ENCODE measurements at regions of chr3 and their contacts with region 1.

Region 1: GRCh38 chr3:11379233-11379823 is 107.1 kb downstream of the ATG7 start:
- DNase-seq: peak; percentile 74
- H3K4me3 ChIP-seq: no peak overlapping the region
- H3K27ac ChIP-seq: peak overlapping the region; percentile 65
- H3K27me3 ChIP-seq: no peaks in the 10 kb centered on the region
- CTCF ChIP-seq: peak; percentile 49

Region 2: GRCh38 chr3:11250902-11251813 is 128.2 kb before region 1 on chr3:
- in situ Hi-C with region 1: no loop called
- DNase-seq: no peak
- H3K4me3 ChIP-seq: no peak overlapping the region
- H3K27ac ChIP-seq: no peak overlapping the region
- H3K27me3 ChIP-seq: no peaks in the 10 kb centered on the region
- CTCF ChIP-seq: no peak

Region 3: DNA sequence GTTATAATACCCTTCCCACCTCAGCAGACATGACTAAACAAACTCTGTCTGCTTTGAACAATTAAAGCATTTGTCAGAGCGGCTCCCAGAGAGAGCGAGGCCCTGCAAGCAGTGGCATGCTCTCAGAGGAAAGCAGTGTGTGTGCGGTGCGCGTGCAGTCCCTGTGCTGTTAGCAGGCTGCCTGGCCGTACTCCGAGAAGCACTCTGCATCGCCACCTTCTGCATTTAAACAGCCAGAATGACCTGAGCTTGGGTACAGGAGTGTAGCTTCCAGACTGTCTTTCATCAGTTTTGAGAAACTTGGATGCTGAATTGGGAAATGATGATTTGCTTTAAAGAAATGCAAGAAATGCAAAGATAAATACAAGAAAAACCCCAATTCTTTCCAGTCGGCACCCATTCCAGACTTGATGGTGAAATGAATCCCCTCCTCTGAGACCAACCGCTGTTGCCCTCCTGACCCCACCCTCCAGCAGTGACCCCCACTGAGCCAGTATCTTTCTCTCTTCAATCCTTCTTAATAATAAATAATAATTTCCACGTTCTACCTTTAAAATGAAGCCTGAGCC is 150.9 kb after region 1 on chr3:
- in situ Hi-C with region 1: loop called (anchors 25 kb)
- DNase-seq: peak; percentile 96
- H3K4me3 ChIP-seq: no peak overlapping the region
- H3K27ac ChIP-seq: peak overlapping the region; percentile 90
- H3K27me3 ChIP-seq: no peaks in the 10 kb centered on the region
- CTCF ChIP-seq: peak; percentile 55

Region 4: DNA sequence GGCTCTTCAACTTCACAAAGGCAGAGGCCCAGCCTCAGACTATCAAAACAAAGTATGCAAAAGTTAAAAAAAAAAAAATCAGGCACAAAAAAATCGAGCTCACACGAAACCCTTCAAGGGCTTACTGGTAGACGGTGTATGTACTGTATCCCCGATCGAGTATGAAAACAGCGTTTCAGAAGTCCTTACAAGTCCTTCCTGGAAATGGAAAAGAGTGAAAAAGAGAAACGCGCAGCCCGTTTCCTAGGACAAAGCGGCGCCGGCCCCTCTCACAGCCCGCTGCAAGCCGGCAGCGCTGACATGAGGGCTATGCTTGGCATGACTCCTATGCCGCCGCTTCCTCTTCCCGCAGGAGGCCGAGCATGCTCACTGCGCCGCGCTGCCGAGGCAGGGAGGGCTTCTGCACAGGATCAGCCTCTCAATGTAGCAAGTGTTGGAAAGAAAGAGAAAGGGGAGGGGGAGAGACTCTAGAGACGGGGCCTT is 264.3 kb after region 1 on chr3 and contains the start of gene VGLL4:
- in situ Hi-C with region 1: loop called (anchors 25 kb)
- DNase-seq: peak; percentile 85
- H3K4me3 ChIP-seq: peak within 1 kb of the TSS; percentile 96
- H3K27ac ChIP-seq: peak within 1 kb of the TSS; percentile 92
- H3K27me3 ChIP-seq: no peaks in the 10 kb centered on the region
- CTCF ChIP-seq: peak; percentile 38

Measured in brain microvascular endothelial cell (primary cell).